GM12878 (cell line): ENCODE measurements at regions of chr10 and their contacts with region 1.

Region 1: DNA sequence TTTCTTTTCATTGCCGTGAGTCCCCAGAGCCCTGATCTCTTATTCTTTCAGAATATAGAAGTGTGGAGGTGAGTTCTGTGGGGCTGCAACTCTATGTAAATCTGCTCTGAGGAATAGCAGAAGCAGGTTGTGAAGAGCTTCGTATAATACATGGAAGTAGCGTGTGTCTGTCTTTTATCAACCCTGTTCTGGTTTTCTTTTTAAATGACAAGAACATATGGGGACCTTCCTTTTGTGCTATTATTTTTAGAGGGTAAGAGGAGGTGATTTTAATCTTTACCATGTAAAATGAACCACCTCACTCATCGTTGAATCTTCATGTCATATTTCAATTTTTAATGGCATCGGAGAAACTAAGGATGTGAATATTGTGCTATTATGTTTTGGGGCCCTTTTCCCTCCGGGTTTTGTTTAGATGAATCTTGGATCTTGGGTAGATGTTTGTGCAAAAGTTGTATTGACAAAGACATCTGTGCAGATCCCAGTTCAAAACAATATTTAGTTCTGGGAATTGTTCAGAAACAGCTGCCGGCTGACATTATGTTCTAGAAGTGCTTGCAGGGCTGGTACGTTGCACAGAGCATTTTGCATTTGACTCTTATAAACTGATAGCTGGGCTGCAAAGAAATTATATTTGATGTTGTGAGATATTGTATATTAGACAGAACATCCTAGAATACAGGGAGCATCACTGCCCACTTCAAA is 46.7 kb downstream of the PLXDC2 start:
- DNase-seq: no peak
- ATAC-seq: no peak
- H3K4me3 ChIP-seq: no peak overlapping the region
- H3K27ac ChIP-seq: no peak overlapping the region
- H3K4me1 ChIP-seq: no peaks in the 10 kb centered on the region
- H3K27me3 ChIP-seq: no peaks in the 10 kb centered on the region
- CTCF ChIP-seq: no peak
- EP300 ChIP-seq: no peak
- POLR2A ChIP-seq: no peak
- RAD21 ChIP-seq: no peak

Region 2: DNA sequence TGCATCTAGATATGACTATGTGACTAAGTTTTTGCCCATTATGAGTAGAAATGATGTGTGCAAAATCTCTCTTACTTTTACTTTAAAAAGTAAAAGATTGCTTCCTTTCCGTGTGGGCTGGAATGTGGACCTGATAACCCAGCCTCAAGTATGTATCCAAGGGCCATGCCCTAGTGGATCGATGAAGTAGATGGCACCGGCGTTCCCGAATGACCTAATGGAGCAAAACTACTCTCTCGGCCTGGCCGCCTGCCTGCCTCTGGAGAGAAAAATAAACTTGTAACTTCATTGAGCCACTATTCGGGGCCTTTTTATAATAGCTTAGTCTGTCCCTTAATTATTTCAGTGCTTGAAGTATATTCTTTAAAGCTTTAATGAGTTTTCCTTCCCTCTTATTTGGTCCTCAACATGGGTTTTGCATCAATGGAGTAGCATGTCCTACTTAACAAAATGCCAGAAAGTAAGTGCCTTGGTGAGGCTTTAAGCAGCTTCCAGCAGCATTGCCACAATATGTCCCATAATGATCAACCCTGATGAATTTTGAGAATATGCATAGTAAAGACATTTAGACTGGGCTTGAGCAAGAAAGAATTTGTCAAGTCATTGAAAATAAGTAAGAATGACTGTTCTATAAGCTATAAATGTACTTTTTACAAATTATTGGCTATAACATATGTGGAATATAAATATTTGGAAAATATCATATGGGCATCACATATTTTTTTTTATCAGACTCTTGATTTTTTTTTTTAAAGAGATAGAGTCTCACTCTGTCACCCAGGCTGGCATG is 14.7 kb after region 1 on chr10:
- CTCF ChIA-PET with region 1: no interaction called
- POLR2A ChIA-PET with region 1: no interaction called
- RAD21 ChIA-PET with region 1: no interaction called
- SMC1A ChIA-PET with region 1: interaction called, 10 read pairs
- in situ Hi-C with region 1: no loop called
- intact Hi-C with region 1: no loop called
- DNase-seq: no peak
- ATAC-seq: no peak
- H3K4me3 ChIP-seq: no peak overlapping the region
- H3K27ac ChIP-seq: no peak overlapping the region
- H3K4me1 ChIP-seq: no peaks in the 10 kb centered on the region
- H3K27me3 ChIP-seq: no peaks in the 10 kb centered on the region
- CTCF ChIP-seq: no peak
- EP300 ChIP-seq: no peak
- POLR2A ChIP-seq: no peak
- RAD21 ChIP-seq: no peak

Region 3: DNA sequence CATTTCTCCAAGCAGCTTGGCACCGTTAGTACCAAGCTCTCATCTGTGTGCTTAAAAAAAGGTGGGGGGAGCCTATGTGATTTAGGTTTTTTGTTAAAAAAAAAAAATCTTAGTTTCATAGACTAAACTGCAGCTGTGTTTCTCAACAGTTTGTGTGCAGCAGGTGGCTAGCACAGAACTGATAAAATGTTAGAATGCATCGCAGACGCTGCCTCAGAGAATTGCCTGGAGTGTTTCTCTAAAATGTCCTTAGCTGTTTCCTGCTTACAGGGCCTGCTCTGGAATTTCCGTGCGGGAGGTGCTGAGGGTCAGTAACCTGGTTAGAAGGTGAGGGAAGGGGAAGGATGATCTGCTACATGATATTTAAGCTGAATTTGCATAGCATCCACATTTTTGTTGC is 222.2 kb after region 1 on chr10:
- CTCF ChIA-PET with region 1: no interaction called
- POLR2A ChIA-PET with region 1: no interaction called
- RAD21 ChIA-PET with region 1: no interaction called
- SMC1A ChIA-PET with region 1: no interaction called
- in situ Hi-C with region 1: no loop called
- intact Hi-C with region 1: no loop called
- DNase-seq: no peak
- ATAC-seq: no peak
- H3K4me3 ChIP-seq: no peak overlapping the region
- H3K27ac ChIP-seq: no peak overlapping the region
- H3K4me1 ChIP-seq: no peaks in the 10 kb centered on the region
- H3K27me3 ChIP-seq: no peaks in the 10 kb centered on the region
- CTCF ChIP-seq: no peak
- EP300 ChIP-seq: no peak
- POLR2A ChIP-seq: no peak
- RAD21 ChIP-seq: no peak

Region 4: DNA sequence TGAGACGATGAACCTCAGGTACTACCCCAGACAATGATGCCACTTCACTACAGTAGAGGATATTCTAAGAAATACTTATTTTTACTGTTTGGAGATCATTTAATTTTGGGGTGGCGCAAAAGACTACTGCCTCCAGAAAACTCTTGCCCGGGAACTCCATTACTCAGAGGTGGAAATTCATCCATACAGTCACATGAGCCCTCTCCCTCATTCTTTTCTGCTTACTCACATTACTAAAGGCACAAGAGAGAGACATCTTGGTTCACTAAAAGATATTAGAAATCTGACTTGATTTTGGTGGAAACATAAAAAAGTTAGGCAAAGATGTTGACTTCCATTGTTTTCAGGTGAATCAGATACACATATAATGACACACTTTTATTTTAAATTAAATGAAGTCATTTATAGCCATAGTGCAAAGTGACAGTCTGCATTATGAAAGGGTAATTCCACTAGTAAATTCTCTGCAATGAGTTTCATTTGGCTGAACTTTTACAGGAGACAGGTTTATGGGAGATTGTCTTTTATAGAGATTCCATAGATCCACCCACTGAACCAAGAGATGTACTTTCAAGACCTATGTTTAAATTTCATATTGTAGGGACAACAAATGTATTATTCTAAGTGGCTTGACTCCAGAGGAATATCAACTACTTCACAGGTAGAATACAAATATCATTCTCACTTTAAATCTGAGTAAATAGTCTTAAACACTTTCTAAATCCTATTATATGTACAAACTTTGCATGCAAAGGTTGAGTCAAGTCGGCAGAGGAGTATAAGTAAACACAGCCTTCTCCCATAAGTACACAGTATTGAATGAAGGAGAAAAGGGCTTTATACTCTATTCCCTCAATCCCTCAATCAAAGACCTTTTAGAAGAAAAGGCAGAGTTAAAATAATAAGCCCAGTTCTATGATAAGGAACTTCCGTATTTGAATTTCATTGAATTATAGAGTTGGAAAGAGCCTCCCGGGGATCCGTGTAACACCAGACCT is 1015.3 kb after region 1 on chr10:
- CTCF ChIA-PET with region 1: no interaction called
- POLR2A ChIA-PET with region 1: no interaction called
- RAD21 ChIA-PET with region 1: no interaction called
- SMC1A ChIA-PET with region 1: no interaction called
- in situ Hi-C with region 1: no loop called
- intact Hi-C with region 1: no loop called
- DNase-seq: no peak
- ATAC-seq: no peak
- H3K4me3 ChIP-seq: no peak overlapping the region
- H3K27ac ChIP-seq: no peak overlapping the region
- H3K4me1 ChIP-seq: no peaks in the 10 kb centered on the region
- H3K27me3 ChIP-seq: no peaks in the 10 kb centered on the region
- CTCF ChIP-seq: no peak
- EP300 ChIP-seq: no peak
- POLR2A ChIP-seq: no peak
- RAD21 ChIP-seq: no peak